ENCODE measurements at regions of chr10 and their contacts with region 1.

Region 1: DNA sequence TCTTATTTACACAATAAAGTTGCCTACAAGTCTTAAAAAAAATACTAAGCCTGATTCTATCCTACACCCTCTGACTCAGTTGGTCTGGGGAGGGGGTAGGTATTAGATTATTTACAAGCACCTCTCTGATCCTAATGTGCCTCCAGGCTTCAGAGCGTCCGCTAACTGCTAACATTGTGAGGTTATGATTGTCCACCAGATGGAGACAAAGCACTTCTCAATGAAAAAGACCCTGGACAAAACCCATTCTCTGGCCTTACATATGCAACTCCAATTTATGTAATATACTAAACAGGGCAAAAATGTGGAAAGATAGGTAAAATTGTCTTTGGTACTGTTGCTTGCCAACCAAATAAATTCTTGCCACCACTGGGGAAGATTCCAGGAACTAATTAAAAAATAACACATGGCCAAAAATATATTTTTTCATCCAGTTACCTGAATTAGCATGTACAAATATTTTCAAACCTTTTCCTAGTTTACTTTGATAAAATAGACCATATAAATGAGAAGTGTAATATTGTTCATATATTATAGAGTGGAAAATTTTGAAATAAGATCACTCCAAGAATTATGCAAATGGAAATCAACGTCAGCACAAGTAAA is 92.4 kb downstream of the KIF20B start:
- DNase-seq: peak in 7 of 9 donors; percentile 19 to 58 (median 42)
- ATAC-seq: peak; percentile 76
- H3K4me3 ChIP-seq: no peak overlapping the region
- H3K4me3 Mint-ChIP-seq: no peak overlapping the region
- H3K27ac ChIP-seq: no peak overlapping the region
- H3K27ac Mint-ChIP-seq: no peak overlapping the region
- H3K4me1 ChIP-seq: no peaks in the 10 kb centered on the region
- H3K4me1 Mint-ChIP-seq: peaks cover 0 to 7% (median 0%) of the 10 kb centered on the region in 7 donors
- H3K27me3 ChIP-seq: no peaks in the 10 kb centered on the region
- H3K27me3 Mint-ChIP-seq: peaks cover 4 to 17% (median 14%) of the 10 kb centered on the region in 5 donors

Region 2: GRCh38 chr10:89609833-89610346 is 183.9 kb before region 1 on chr10:
- CTCF ChIA-PET with region 1: no interaction called
- POLR2A ChIA-PET with region 1: no interaction called
- intact Hi-C with region 1: no loop called
- DNase-seq: no peak
- ATAC-seq: no peak
- H3K4me3 ChIP-seq: no peak overlapping the region
- H3K4me3 Mint-ChIP-seq: no peak overlapping the region
- H3K27ac ChIP-seq: no peak overlapping the region
- H3K27ac Mint-ChIP-seq: no peak overlapping the region
- H3K4me1 ChIP-seq: peaks cover 0 to 6% of the 10 kb centered on the region in 2 donors
- H3K4me1 Mint-ChIP-seq: peaks cover 5 to 17% (median 9%) of the 10 kb centered on the region in 7 donors
- H3K27me3 ChIP-seq: no peaks in the 10 kb centered on the region
- H3K27me3 Mint-ChIP-seq: no peaks in the 10 kb centered on the region

Region 3: DNA sequence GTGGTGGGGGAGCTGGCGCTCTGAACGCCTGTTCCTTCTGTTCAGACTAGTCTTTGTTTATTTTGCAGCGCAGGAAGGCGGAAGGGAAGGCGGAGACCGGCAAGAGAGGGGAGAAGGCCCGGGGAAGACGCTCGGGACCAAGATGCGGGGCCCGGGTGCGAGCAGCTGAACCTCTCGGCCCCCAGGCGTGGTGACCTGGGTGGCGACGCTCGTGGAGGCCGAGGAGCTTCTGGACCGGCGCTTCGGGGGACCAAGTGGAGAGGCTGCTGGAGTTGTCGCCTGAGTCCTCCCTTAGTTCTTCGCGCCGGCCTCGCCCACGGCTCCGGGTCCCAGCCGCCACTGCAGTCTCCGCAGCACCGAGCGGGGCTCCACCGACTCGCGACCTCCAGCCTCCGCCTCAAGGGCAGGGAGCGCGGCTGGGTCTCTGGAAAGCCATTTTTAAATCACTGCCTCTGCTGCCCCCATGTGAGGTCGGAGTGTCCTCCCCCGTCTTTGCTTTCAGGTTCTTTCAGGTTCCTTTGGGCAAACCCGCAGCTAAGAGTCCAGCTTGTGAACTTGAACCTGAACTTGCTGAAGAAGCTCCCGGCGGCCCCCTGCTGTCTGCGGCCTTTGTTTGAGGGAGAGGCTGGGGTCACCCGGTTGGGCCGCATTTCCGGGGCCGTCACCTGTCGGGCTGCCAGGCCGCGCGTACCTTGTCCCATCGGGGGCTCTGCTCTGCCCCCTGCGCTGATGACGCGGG is 43.6 kb after region 1 on chr10:
- CTCF ChIA-PET with region 1: no interaction called
- POLR2A ChIA-PET with region 1: no interaction called
- intact Hi-C with region 1: loop called (anchors 1 to 5 kb)
- DNase-seq: peak; percentile 14 to 48 (median 34)
- ATAC-seq: peak; percentile 70
- H3K4me3 ChIP-seq: peak overlapping the region; percentile 57
- H3K4me3 Mint-ChIP-seq: peak overlapping the region; percentile 87 to 94 (median 91)
- H3K27ac ChIP-seq: peak overlapping the region; percentile 65
- H3K27ac Mint-ChIP-seq: peak overlapping the region; percentile 59 to 92 (median 85)
- H3K4me1 ChIP-seq: peaks cover 0 to 7% of the 10 kb centered on the region in 2 donors
- H3K4me1 Mint-ChIP-seq: peaks cover 0 to 30% (median 22%) of the 10 kb centered on the region in 7 donors
- H3K27me3 ChIP-seq: no peaks in the 10 kb centered on the region
- H3K27me3 Mint-ChIP-seq: peaks cover 0 to 36% (median 5%) of the 10 kb centered on the region in 5 donors

Region 4: DNA sequence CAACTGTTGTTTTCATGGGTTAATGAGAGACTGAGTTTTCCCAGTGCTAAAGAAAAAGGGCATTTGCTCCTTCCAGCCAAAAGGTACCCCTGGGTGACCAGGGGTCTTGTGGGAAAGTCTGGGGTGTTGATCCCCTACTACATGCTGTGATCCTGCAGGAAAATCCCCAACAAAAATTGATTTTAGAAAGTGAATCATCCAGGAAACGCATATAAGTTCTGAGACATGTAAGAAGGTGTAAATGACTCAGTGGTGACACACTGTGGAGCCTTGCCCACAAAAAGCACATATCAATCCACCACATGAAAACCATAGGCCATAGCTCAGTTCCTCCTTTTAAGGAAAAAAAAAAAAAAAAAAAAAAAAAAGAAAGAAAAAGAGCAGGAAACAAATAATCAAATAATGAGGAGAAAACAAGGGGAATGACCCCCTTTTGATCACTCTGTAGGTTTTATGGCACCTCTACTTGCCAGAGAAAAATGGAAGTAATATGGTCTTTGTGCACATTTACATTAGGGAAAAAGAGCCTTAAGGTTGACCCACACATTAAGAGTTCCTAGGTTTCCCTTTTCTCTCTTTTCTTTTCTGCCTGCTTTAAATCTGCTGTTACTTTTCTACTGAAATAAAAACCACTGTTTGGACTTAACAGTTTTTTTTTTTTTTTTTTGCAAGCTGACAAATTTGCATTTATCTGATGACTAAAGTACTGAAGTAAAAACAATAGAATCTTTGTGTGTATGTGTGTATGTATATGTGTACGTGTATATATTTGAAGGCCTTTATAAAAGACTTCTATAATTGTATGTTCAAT is 293.6 kb after region 1 on chr10:
- CTCF ChIA-PET with region 1: no interaction called
- POLR2A ChIA-PET with region 1: no interaction called
- intact Hi-C with region 1: loop called (anchors 5 kb)
- DNase-seq: no peak
- ATAC-seq: no peak
- H3K4me3 ChIP-seq: no peak overlapping the region
- H3K4me3 Mint-ChIP-seq: no peak overlapping the region
- H3K27ac ChIP-seq: no peak overlapping the region
- H3K27ac Mint-ChIP-seq: no peak overlapping the region
- H3K4me1 ChIP-seq: no peaks in the 10 kb centered on the region
- H3K4me1 Mint-ChIP-seq: peaks cover 0 to 2% (median 0%) of the 10 kb centered on the region in 7 donors
- H3K27me3 ChIP-seq: no peaks in the 10 kb centered on the region
- H3K27me3 Mint-ChIP-seq: peaks cover 0 to 5% (median 0%) of the 10 kb centered on the region in 5 donors

Region 5: DNA sequence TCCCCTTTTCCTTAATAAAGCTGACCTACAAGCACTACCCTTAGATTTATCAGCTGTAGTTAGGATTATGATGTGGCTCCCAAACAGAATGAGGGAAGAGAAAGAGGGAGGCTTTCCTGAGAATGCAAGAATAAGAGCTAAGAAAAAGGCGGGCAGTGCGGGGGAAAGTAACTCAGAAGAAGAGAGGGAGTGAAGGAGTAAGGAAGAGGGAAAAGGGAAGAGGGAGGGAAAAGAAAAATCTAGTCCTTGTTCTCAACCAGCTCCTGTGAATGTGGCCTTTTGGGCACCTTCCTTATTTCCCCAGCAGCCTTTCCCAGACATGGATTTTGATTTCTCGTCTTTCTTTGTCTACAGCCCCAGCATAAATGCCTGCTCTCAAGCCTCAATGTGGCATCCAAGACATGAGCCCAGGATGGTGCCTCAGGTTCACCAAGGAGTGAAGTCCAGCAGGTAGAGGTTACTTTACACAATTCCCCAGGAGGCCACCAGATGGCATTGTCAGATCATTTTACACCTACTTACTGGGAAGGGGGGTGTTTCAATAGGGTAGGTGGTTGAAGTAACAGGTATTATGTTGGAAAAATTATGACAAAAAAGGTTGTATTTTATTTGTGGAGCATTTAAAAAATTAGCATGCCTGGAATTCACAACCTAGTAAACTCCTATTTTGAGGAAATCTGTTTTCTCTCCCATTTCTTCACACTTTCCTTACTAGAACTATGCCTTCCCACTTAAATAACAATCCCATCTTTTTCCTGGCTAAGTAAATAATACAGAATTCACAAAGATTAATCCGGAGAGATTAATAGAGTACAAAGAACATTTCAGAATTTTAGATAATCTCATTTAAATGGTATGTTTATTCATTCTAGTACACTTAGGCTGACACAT is 957.6 kb after region 1 on chr10:
- CTCF ChIA-PET with region 1: no interaction called
- POLR2A ChIA-PET with region 1: no interaction called
- intact Hi-C with region 1: loop called (anchors 1 kb)
- DNase-seq: peak in 8 of 9 donors; percentile 10 to 38 (median 25)
- ATAC-seq: peak; percentile 54
- H3K4me3 ChIP-seq: no peak overlapping the region
- H3K4me3 Mint-ChIP-seq: no peak overlapping the region
- H3K27ac ChIP-seq: no peak overlapping the region
- H3K27ac Mint-ChIP-seq: no peak overlapping the region
- H3K4me1 ChIP-seq: no peaks in the 10 kb centered on the region
- H3K4me1 Mint-ChIP-seq: no peaks in the 10 kb centered on the region
- H3K27me3 ChIP-seq: no peaks in the 10 kb centered on the region
- H3K27me3 Mint-ChIP-seq: peaks cover 38 to 54% (median 48%) of the 10 kb centered on the region in 5 donors

Region 6: GRCh38 chr10:90862908-90863514 is 1069.3 kb after region 1 on chr10:
- CTCF ChIA-PET with region 1: interaction called, 3 read pairs
- POLR2A ChIA-PET with region 1: no interaction called
- intact Hi-C with region 1: loop called in 1 of 2 experiments (anchors 1 kb)
- DNase-seq: peak in 3 of 9 donors; percentile 7 to 28 (median 27)
- ATAC-seq: no peak
- H3K4me3 ChIP-seq: no peak overlapping the region
- H3K4me3 Mint-ChIP-seq: no peak overlapping the region
- H3K27ac ChIP-seq: no peak overlapping the region
- H3K27ac Mint-ChIP-seq: no peak overlapping the region
- H3K4me1 ChIP-seq: no peaks in the 10 kb centered on the region
- H3K4me1 Mint-ChIP-seq: peaks cover 0 to 9% (median 4%) of the 10 kb centered on the region in 7 donors
- H3K27me3 ChIP-seq: no peaks in the 10 kb centered on the region
- H3K27me3 Mint-ChIP-seq: peaks cover 28 to 89% (median 59%) of the 10 kb centered on the region in 5 donors

Measured in naive thymus-derived CD4-positive, alpha-beta T cell (primary cell).